WTC11 (cell line): ENCODE measurements at regions of chr10 and their contacts with region 1.

Region 1: DNA sequence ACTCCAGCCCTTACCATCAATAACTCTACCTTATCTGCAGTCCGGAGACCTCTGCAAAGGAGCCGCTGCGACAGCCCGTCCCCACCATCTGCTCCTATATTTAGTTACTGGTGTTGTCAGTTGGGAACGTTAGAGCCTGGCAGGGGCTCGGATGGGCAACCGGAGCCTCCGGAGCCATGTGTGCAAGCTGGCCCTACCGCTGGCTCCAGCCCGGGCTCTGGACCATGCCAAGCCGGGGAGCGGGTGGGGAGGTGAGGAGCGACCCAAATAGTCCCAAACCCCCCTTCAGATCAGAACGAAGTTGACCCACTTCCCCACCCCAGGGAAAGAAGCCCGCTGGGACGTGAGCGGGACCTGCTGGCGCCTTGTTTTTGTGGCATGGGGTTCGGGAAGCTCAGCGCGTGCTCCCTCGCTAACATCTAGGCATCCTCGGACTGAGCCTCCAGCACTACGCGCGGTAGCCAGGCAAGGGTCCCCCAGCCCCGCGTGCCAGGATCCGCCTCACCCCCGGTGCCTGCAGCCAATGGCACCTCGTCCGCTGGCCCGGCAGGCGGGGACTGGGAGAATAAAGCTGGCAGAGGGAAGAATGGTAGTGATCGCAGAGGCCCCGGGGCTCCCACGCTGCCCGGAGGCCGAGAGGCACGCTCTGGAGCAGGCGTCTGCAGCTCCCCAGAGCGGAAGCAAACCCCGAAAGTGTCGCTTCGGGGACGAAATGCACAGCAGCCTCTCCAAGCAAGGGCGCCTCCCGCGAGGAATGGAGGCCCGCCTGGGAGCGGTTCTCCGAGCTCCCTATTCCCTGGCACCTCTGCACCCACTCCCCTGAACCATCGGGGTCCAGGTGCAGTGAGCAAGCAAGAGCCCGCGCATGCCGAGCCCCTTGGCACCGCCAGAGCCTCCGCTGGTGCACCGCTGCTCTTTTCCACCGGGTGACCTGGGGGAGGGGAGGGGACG is 679 bp downstream of the LRRC20 start:
- DNase-seq: peak; percentile 62
- ATAC-seq: peak; percentile 16
- H3K4me3 Mint-ChIP-seq: peak overlapping the region; percentile 82
- H3K27ac Mint-ChIP-seq: no peak overlapping the region
- H3K4me1 Mint-ChIP-seq: peaks cover 46% of the 10 kb centered on the region
- H3K27me3 Mint-ChIP-seq: peaks cover 14% of the 10 kb centered on the region
- CTCF ChIP-seq: no peak

Region 2: DNA sequence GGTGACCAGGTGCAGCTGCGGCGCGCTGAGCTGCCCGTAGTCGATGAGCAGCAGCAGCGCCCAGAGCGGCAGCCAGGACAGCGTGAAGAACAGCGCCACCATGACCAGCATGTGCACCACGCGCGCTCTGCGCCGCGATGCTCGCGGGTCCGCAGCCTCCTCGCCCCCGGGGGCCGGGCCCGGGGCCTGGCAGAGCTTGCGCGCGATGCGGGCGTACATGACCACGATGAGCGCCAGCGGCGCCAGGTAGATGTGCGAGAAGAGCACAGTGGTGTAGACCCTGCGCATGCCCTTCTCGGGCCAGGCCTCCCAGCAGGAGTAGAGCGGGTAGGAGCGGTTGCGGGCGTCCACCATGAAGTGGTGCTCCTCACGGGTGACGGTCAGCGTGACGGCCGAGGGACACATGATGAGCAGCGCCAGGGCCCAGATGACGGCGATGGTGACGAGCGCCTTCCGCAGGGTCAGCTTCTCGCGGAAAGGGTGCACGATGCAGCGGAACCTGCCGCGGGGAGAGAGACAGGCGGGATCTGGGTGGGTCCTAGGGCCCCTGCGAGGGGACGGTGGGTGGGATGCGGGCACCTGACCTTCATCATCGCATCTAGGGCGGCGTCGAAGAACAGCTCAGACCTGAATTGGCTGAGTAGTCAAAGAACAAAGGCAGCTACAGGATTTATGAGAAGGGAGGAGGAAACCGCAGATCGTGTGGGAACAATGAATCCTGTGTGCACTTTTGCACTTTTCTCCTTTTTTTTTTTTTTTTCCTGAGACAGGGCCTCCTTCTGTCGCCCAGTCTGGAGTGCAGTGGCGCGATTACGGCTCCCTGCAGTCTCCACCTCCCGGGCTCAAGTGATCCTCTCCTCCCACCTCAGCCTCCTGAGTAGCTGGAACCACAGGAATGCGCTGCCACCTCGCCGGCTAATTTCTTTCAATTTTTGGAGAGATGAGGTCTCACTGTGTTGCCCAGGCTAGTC is 126.1 kb before region 1 on chr10:
- CTCF ChIA-PET with region 1: interaction called, 11 read pairs
- POLR2A ChIA-PET with region 1: no interaction called
- DNase-seq: no peak
- ATAC-seq: no peak; the same call in 1 of the 2 replicates
- H3K4me3 Mint-ChIP-seq: no peak overlapping the region
- H3K27ac Mint-ChIP-seq: no peak overlapping the region
- H3K4me1 Mint-ChIP-seq: 0 out of 2 replicates have a peak, but pooled peaks cover 5% of the 10 kb centered on the region
- H3K27me3 Mint-ChIP-seq: peaks cover 6% of the 10 kb centered on the region; the same call in 1 of the 2 replicates
- CTCF ChIP-seq: no peak

Region 3: GRCh38 chr10:70404036-70404786 is 22.5 kb after region 1 on chr10 and contains the start of gene EIF4EBP2:
- CTCF ChIA-PET with region 1: interaction called, 36 read pairs
- POLR2A ChIA-PET with region 1: interaction called, 5 read pairs
- DNase-seq: peak; percentile 99
- ATAC-seq: peak; percentile 9
- H3K4me3 Mint-ChIP-seq: peak within 1 kb of the TSS; percentile 90
- H3K27ac Mint-ChIP-seq: peak within 1 kb of the TSS; percentile 95
- H3K4me1 Mint-ChIP-seq: peaks cover 36% of the 10 kb centered on the region
- H3K27me3 Mint-ChIP-seq: no peaks in the 10 kb centered on the region
- CTCF ChIP-seq: no peak
- total RNA-seq, gene EIF4EBP2: 111 to 114 TPM (median 112 TPM) in 3 replicates